ENCODE measurements at regions of chrX and their contacts with region 1.

Region 1: GRCh38 chrX:101478366-101478765 is 6.9 kb upstream of the ARMCX4 start:
- DNase-seq: no peak
- ATAC-seq: no peak
- H3K4me3 ChIP-seq: no peak overlapping the region
- H3K27ac ChIP-seq: no peak overlapping the region
- H3K4me1 ChIP-seq: no peaks in the 10 kb centered on the region
- H3K27me3 ChIP-seq: no peaks in the 10 kb centered on the region
- CTCF ChIP-seq: no peak

Region 2: GRCh38 chrX:101290789-101291607 is 187.4 kb before region 1 on chrX and contains the start of gene TAF7L:
- CTCF ChIA-PET with region 1: no interaction called
- POLR2A ChIA-PET with region 1: no interaction called
- in situ Hi-C with region 1: no loop called
- intact Hi-C with region 1: no loop called
- DNase-seq: no peak
- ATAC-seq: no peak
- H3K4me3 ChIP-seq: no peak within 1 kb of the TSS
- H3K27ac ChIP-seq: no peak within 1 kb of the TSS
- H3K4me1 ChIP-seq: no peaks in the 10 kb centered on the region
- H3K27me3 ChIP-seq: 0 out of 2 replicates have a peak, but pooled peaks cover 2% of the 10 kb centered on the region
- CTCF ChIP-seq: no peak
- total RNA-seq, gene TAF7L: 0.18 TPM

Region 3: GRCh38 chrX:101550362-101550750 is 72.0 kb after region 1 on chrX and contains the start of gene ARMCX1:
- CTCF ChIA-PET with region 1: no interaction called
- POLR2A ChIA-PET with region 1: interaction called, 10 read pairs
- in situ Hi-C with region 1: no loop called
- intact Hi-C with region 1: no loop called
- DNase-seq: no peak
- ATAC-seq: peak; percentile 78
- H3K4me3 ChIP-seq: peak within 1 kb of the TSS; percentile 53 to 88
- H3K27ac ChIP-seq: peak within 1 kb of the TSS; percentile 34; the same call in 1 of the 2 replicates
- H3K4me1 ChIP-seq: no peaks in the 10 kb centered on the region; the same call in 1 of the 2 replicates
- H3K27me3 ChIP-seq: no peaks in the 10 kb centered on the region
- CTCF ChIP-seq: no peak
- total RNA-seq, gene ARMCX1: 4.7 TPM